ENCODE measurements at regions of chr5 and their contacts with region 1.

Region 1: GRCh38 chr5:80093796-80094195 is 58.6 kb downstream of the THBS4 start:
- ATAC-seq: peak in 4 of 8 experiments; percentile 22 to 84 (median 37)
- H3K4me3 ChIP-seq: no peak overlapping the region
- H3K27ac ChIP-seq: no peak overlapping the region
- H3K4me1 ChIP-seq: peaks cover 0 to 11% of the 10 kb centered on the region in 2 donors

Region 2: DNA sequence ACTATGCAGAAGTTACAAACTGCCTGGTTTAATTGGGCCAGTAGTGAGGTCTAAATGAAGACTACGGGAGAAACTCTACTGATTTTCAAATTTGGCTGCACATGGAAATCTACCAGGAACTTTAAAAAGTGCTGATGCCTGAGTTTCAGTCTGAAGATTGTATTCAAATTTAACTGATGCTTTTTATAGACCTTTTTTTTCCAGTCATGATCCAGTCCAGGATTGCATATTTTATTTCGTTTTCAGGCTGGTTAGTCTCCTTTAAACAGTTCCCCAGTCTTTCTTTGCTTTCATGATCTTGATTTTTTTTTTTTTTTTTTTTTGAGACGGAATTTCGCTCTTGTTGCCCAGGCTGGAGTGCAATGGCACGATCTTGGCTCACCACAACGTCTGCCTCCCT is 202.3 kb after region 1 on chr5:
- in situ Hi-C with region 1: loop called in 2 of 9 experiments (anchors 10 kb)
- ATAC-seq: peak in 2 of 8 experiments; percentile 29 to 55
- H3K4me3 ChIP-seq: no peak overlapping the region
- H3K27ac ChIP-seq: no peak overlapping the region
- H3K4me1 ChIP-seq: no peaks in the 10 kb centered on the region

Region 3: GRCh38 chr5:80308526-80308925 is 214.7 kb after region 1 on chr5:
- in situ Hi-C with region 1: loop called in 1 of 9 experiments (anchors 10 kb)
- ATAC-seq: no peak
- H3K4me3 ChIP-seq: no peak overlapping the region
- H3K27ac ChIP-seq: no peak overlapping the region
- H3K4me1 ChIP-seq: no peaks in the 10 kb centered on the region